Mammary epithelial cell (primary cell): ENCODE measurements at regions of chr19 and their contacts with region 1.

Region 1: GRCh38 chr19:8654591-8655339 is 24.3 kb downstream of the NFILZ start:
- DNase-seq: peak; percentile 16
- H3K4me3 ChIP-seq: no peak overlapping the region
- H3K27ac ChIP-seq: no peak overlapping the region
- H3K4me1 ChIP-seq: no peaks in the 10 kb centered on the region
- H3K27me3 ChIP-seq: no peaks in the 10 kb centered on the region
- CTCF ChIP-seq: peak; percentile 78 to 91

Region 2: DNA sequence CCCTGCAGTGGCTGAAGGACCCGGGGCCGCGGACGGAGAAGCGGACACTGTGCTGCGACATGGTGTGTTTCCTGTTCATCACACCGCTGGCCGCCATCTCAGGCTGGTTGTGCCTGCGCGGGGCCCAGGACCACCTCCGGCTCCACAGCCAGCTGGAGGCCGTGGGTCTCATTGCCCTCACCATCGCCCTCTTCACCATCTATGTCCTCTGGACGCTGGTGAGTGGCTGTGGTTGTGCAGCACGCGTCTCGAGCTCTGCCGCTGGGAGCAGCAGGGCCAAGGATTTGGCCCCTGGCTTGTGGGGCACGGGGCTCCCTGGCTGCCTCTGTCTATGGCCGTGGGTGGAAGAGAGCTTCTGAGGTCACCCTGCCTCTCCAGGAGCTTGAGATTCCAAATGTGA is 224.1 kb before region 1 on chr19:
- CTCF ChIA-PET with region 1: interaction called, 11 read pairs
- dilution Hi-C with region 1: no loop called
- in situ Hi-C with region 1: no loop called
- intact Hi-C with region 1: no loop called
- DNase-seq: no peak
- H3K4me3 ChIP-seq: no peak overlapping the region
- H3K27ac ChIP-seq: no peak overlapping the region
- H3K4me1 ChIP-seq: no peaks in the 10 kb centered on the region
- H3K27me3 ChIP-seq: no peaks in the 10 kb centered on the region
- CTCF ChIP-seq: no peak

Region 3: GRCh38 chr19:8580710-8581281 is 74.0 kb before region 1 on chr19:
- CTCF ChIA-PET with region 1: no interaction called
- dilution Hi-C with region 1: no loop called
- in situ Hi-C with region 1: no loop called
- intact Hi-C with region 1: no loop called
- DNase-seq: peak; percentile 42
- H3K4me3 ChIP-seq: no peak overlapping the region
- H3K27ac ChIP-seq: no peak overlapping the region
- H3K4me1 ChIP-seq: no peaks in the 10 kb centered on the region
- H3K27me3 ChIP-seq: no peaks in the 10 kb centered on the region
- CTCF ChIP-seq: peak; percentile 97 to 99

Region 4: DNA sequence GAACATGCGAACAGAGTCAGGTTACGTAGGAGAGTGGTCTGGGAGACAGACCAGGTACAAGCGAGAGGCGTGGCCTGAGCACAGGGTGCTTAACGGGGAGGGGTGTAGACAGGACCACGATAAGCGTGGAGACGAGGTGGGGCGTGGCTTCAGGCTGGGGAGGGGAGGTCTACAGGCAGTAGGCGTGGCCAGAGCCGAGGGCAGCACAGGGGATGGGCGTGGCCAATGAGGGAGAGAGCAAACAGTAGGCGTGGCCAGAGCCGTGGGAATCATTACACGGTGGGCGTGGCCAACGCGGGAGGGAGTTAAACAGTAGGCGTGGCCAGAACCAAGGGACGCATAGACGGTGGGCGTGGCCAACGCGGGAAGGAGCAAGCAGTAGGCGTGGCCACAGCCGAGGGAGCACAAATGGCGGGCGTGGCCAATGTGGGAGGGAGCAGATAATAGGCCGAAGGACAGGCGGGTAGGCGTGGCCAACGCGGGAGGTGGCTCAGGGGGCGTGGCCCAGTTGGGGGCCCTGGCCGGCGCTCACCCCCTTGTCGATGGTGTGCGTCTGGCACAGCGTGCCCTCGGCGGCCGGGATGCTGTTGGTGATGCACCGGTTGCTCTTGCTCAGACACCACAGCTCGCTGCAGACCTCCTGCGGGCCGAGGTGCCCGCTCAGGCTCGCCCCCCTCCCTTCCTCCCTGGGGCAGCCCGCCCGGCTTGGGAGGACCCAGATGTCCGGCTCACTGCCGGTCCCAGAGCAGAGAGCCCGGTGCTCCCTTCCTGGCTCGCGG is 62.3 kb before region 1 on chr19:
- CTCF ChIA-PET with region 1: no interaction called
- dilution Hi-C with region 1: loop called (anchors 5 kb)
- in situ Hi-C with region 1: no loop called
- intact Hi-C with region 1: no loop called
- DNase-seq: peak; percentile 25
- H3K4me3 ChIP-seq: no peak overlapping the region
- H3K27ac ChIP-seq: no peak overlapping the region
- H3K4me1 ChIP-seq: no peaks in the 10 kb centered on the region
- H3K27me3 ChIP-seq: no peaks in the 10 kb centered on the region
- CTCF ChIP-seq: no peak

Region 5: GRCh38 chr19:8641908-8642547 is 12.7 kb before region 1 on chr19:
- CTCF ChIA-PET with region 1: no interaction called
- dilution Hi-C with region 1: no loop called
- in situ Hi-C with region 1: no loop called
- intact Hi-C with region 1: no loop called
- DNase-seq: peak; percentile 32
- H3K4me3 ChIP-seq: no peak overlapping the region
- H3K27ac ChIP-seq: no peak overlapping the region
- H3K4me1 ChIP-seq: no peaks in the 10 kb centered on the region
- H3K27me3 ChIP-seq: no peaks in the 10 kb centered on the region
- CTCF ChIP-seq: peak; percentile 34 to 47

Region 6: GRCh38 chr19:8697671-8698432 is 43.1 kb after region 1 on chr19:
- CTCF ChIA-PET with region 1: no interaction called
- dilution Hi-C with region 1: no loop called
- in situ Hi-C with region 1: no loop called
- intact Hi-C with region 1: loop called (anchors 1 kb)
- DNase-seq: no peak
- H3K4me3 ChIP-seq: no peak overlapping the region
- H3K27ac ChIP-seq: no peak overlapping the region
- H3K4me1 ChIP-seq: no peaks in the 10 kb centered on the region
- H3K27me3 ChIP-seq: no peaks in the 10 kb centered on the region
- CTCF ChIP-seq: no peak

Region 7: GRCh38 chr19:8821748-8822241 is 167.0 kb after region 1 on chr19:
- CTCF ChIA-PET with region 1: no interaction called
- dilution Hi-C with region 1: no loop called
- in situ Hi-C with region 1: no loop called
- intact Hi-C with region 1: no loop called
- DNase-seq: no peak
- H3K4me3 ChIP-seq: no peak overlapping the region
- H3K27ac ChIP-seq: no peak overlapping the region
- H3K4me1 ChIP-seq: no peaks in the 10 kb centered on the region
- H3K27me3 ChIP-seq: no peaks in the 10 kb centered on the region
- CTCF ChIP-seq: no peak

Region 8: DNA sequence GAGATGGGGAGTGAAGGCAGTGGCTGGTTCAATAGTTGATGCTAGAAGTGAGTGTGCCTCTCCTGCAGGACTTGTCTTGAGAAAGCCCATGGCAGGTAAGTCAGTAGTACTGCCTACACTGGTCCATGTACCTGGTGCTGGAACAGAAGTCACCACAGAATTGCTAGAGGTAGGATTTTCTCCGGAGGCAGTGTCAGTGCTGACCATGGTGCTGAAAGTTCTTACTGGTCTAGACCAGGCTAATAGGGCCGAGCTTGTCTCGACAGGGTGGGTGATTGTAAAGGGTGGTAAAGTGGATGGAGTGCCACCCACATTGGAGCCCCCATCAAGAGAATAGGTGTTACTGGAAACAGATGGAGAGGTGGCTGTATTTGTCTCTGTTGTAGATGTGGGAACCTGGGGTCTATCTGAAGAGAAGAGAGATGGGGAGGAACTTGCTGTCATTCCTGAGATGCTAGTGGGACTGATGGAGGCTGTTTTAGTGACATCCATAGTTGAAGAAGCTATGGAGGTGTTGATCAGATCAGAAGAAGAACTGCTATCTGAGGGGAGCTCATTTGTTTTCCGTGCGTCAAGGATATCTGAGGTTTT is 318.8 kb after region 1 on chr19:
- CTCF ChIA-PET with region 1: no interaction called
- dilution Hi-C with region 1: loop called (anchors 25 kb)
- in situ Hi-C with region 1: no loop called
- intact Hi-C with region 1: no loop called
- DNase-seq: no peak
- H3K4me3 ChIP-seq: no peak overlapping the region
- H3K27ac ChIP-seq: no peak overlapping the region
- H3K4me1 ChIP-seq: no peaks in the 10 kb centered on the region
- H3K27me3 ChIP-seq: no peaks in the 10 kb centered on the region
- CTCF ChIP-seq: no peak

Region 9: GRCh38 chr19:9075064-9075949 is 420.5 kb after region 1 on chr19:
- CTCF ChIA-PET with region 1: no interaction called
- dilution Hi-C with region 1: no loop called
- in situ Hi-C with region 1: loop called (anchors 5 to 10 kb)
- intact Hi-C with region 1: loop called (anchors 1 kb)
- DNase-seq: peak; percentile 98
- H3K4me3 ChIP-seq: no peak overlapping the region
- H3K27ac ChIP-seq: peak overlapping the region; percentile 24
- H3K4me1 ChIP-seq: peaks cover 9% of the 10 kb centered on the region
- H3K27me3 ChIP-seq: no peaks in the 10 kb centered on the region
- CTCF ChIP-seq: no peak